ENCODE measurements at regions of chr10 and their contacts with region 1.

Region 1: DNA sequence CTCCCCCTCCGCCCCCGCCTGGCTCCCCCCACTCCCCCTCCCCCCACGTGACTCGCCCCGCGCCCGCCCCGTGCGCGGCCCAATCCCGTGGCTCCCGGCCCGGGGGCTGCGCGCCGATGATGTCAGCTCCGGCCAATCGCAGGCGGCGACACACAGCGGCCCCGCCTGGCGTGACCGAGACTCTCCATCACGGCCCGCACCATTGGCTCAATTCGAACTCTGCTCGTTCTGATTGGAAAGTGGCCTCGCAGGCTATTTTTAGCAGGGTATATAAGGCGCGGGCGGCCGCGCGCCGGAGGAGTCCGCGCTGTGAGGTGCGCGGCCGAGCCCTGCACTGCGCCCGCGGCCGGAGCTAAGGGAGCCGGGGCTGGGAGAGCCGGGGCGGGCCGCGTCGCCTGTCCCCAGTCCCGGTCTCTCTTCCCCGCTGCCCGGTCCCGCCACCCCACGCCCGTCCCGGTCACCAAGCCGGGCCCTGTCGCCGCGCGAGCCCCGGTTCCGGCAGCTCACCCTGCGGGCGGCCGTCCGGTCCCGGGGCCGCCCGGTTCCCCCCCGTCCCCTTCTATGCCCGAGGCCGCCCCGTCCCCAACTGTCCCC is 345 bp upstream of the KLF6 start:
- DNase-seq: peak; percentile 97
- ATAC-seq: peak; percentile 81
- H3K4me3 ChIP-seq: peak overlapping the region; percentile 91
- H3K27ac ChIP-seq: peak overlapping the region; percentile 97
- H3K4me1 ChIP-seq: peaks cover 15% of the 10 kb centered on the region
- H3K27me3 ChIP-seq: no peaks in the 10 kb centered on the region
- CTCF ChIP-seq: no peak
- POLR2A ChIP-seq: peak; percentile 94
- RAD21 ChIP-seq: peak; percentile 18; the same call in 1 of the 2 replicates

Region 2: GRCh38 chr10:3239066-3239919 is 546.1 kb before region 1 on chr10:
- CTCF ChIA-PET with region 1: no interaction called
- POLR2A ChIA-PET with region 1: no interaction called
- dilution Hi-C with region 1: no loop called
- in situ Hi-C with region 1: no loop called
- intact Hi-C with region 1: loop called (anchors 2 kb)
- DNase-seq: peak; percentile 68
- ATAC-seq: peak; percentile 94
- H3K4me3 ChIP-seq: no peak overlapping the region
- H3K27ac ChIP-seq: peak overlapping the region; percentile 77; the same call in 1 of the 2 replicates
- H3K4me1 ChIP-seq: peaks cover 9% of the 10 kb centered on the region; the same call in 1 of the 2 replicates
- H3K27me3 ChIP-seq: no peaks in the 10 kb centered on the region
- CTCF ChIP-seq: peak; percentile 91
- POLR2A ChIP-seq: 0 out of 2 replicates have a peak, but pooled peaks have one; percentile 25
- RAD21 ChIP-seq: peak; percentile 99

Region 3: GRCh38 chr10:3828404-3829155 is 43.2 kb after region 1 on chr10:
- CTCF ChIA-PET with region 1: interaction called, 3 read pairs
- POLR2A ChIA-PET with region 1: interaction called, 11 read pairs
- dilution Hi-C with region 1: no loop called
- in situ Hi-C with region 1: no loop called
- intact Hi-C with region 1: no loop called
- DNase-seq: peak; percentile 86
- ATAC-seq: peak; percentile 46
- H3K4me3 ChIP-seq: peak overlapping the region; percentile 45; the same call in 1 of the 2 replicates
- H3K27ac ChIP-seq: peak overlapping the region; percentile 78
- H3K4me1 ChIP-seq: peaks cover 26% of the 10 kb centered on the region
- H3K27me3 ChIP-seq: no peaks in the 10 kb centered on the region
- CTCF ChIP-seq: no peak
- POLR2A ChIP-seq: no peak; the same call in 1 of the 2 replicates
- RAD21 ChIP-seq: no peak

Region 4: GRCh38 chr10:3897156-3897555 is 111.8 kb after region 1 on chr10:
- CTCF ChIA-PET with region 1: no interaction called
- POLR2A ChIA-PET with region 1: interaction called, 10 read pairs
- dilution Hi-C with region 1: no loop called
- in situ Hi-C with region 1: no loop called
- intact Hi-C with region 1: no loop called
- DNase-seq: peak; percentile 84
- ATAC-seq: peak; percentile 41
- H3K4me3 ChIP-seq: no peak overlapping the region
- H3K27ac ChIP-seq: no peak overlapping the region
- H3K4me1 ChIP-seq: peaks cover 20% of the 10 kb centered on the region
- H3K27me3 ChIP-seq: no peaks in the 10 kb centered on the region
- CTCF ChIP-seq: no peak
- POLR2A ChIP-seq: no peak
- RAD21 ChIP-seq: no peak

Region 5: GRCh38 chr10:4131407-4132228 is 346.3 kb after region 1 on chr10:
- CTCF ChIA-PET with region 1: interaction called, 3 read pairs
- POLR2A ChIA-PET with region 1: no interaction called
- dilution Hi-C with region 1: no loop called
- in situ Hi-C with region 1: no loop called
- intact Hi-C with region 1: loop called (anchors 5 kb)
- DNase-seq: peak; percentile 93
- ATAC-seq: peak; percentile 95
- H3K4me3 ChIP-seq: no peak overlapping the region
- H3K27ac ChIP-seq: peak overlapping the region; percentile 76
- H3K4me1 ChIP-seq: peaks cover 8% of the 10 kb centered on the region
- H3K27me3 ChIP-seq: no peaks in the 10 kb centered on the region
- CTCF ChIP-seq: no peak
- POLR2A ChIP-seq: no peak
- RAD21 ChIP-seq: no peak

Region 6: DNA sequence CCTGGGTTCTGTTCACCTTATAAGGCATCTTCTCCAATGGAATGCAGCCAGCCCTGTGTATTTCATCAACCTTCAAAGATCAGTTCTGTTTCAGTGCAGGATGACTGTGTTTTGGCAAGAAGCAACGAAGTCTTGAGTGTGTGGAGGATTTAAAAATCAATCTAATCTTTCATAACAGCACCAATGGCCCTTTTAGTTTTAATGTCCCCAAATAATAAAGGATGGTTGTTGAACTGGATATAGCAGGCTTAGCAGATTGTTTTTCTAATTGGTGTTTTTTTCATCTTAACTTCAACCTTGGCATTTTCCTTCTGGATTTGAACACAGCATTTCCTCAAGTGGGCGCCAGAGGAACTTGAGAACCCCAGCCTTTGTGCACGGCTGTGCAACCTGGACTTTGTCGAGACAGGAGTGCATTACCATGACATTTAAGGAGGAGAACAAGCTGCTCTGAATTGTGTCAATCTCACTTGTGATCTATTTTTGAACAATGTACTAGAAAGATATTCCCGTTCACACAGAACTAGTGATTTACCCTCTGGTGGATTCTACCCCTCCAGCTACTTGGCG is 727.4 kb after region 1 on chr10:
- CTCF ChIA-PET with region 1: no interaction called
- POLR2A ChIA-PET with region 1: no interaction called
- dilution Hi-C with region 1: no loop called
- in situ Hi-C with region 1: no loop called
- intact Hi-C with region 1: loop called (anchors 5 kb)
- DNase-seq: peak; percentile 71
- ATAC-seq: peak; percentile 77
- H3K4me3 ChIP-seq: no peak overlapping the region
- H3K27ac ChIP-seq: no peak overlapping the region
- H3K4me1 ChIP-seq: no peaks in the 10 kb centered on the region
- H3K27me3 ChIP-seq: no peaks in the 10 kb centered on the region
- CTCF ChIP-seq: peak; percentile 67
- POLR2A ChIP-seq: no peak
- RAD21 ChIP-seq: peak; percentile 71

Region 7: GRCh38 chr10:4767033-4767814 is 981.9 kb after region 1 on chr10:
- CTCF ChIA-PET with region 1: no interaction called
- POLR2A ChIA-PET with region 1: interaction called, 5 read pairs
- dilution Hi-C with region 1: no loop called
- in situ Hi-C with region 1: loop called (anchors 10 kb)
- intact Hi-C with region 1: loop called (anchors 1 kb)
- DNase-seq: peak; percentile 66
- ATAC-seq: no peak
- H3K4me3 ChIP-seq: no peak overlapping the region
- H3K27ac ChIP-seq: peak overlapping the region; percentile 57
- H3K4me1 ChIP-seq: peaks cover 22% of the 10 kb centered on the region
- H3K27me3 ChIP-seq: no peaks in the 10 kb centered on the region
- CTCF ChIP-seq: peak; percentile 76
- POLR2A ChIP-seq: no peak
- RAD21 ChIP-seq: peak; percentile 83

Measured in IMR-90 (cell line).